KBM-7 (cell line): ENCODE measurements at regions of chr2 and their contacts with region 1.

Region 1: DNA sequence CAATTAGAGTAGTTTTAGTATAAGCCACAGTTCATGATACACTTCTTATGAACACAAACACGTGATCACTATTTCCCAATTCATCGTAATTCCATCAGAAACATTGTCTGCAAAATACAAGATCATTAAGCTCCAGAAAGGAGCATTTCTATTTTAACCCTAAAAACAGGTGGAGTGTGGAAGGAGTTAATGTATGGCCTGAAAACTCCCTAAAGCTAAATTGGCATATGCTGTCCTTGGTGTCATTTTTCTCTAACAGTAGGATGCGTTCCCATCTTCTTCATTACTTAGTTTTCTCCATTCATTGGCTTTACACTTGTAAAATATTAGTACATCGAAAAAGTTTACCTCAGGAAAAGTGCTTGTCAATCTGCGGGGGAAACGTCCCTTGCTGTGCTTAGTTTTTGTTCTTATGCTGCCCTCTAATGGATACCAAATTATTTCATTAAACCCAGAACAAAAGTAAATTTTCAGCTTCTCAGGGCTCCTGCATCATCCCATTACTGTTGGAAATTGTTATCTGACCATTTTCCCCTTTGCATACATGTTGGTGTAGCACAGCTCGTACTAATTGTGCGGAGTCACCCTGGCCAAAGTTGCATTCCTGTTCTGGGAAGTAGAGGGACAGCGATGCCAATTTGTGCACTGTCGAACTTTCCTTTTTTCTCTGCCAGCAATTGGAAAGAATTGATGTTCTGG is 153.4 kb downstream of the GPD2 start:
- DNase-seq: peak; percentile 61

Region 2: DNA sequence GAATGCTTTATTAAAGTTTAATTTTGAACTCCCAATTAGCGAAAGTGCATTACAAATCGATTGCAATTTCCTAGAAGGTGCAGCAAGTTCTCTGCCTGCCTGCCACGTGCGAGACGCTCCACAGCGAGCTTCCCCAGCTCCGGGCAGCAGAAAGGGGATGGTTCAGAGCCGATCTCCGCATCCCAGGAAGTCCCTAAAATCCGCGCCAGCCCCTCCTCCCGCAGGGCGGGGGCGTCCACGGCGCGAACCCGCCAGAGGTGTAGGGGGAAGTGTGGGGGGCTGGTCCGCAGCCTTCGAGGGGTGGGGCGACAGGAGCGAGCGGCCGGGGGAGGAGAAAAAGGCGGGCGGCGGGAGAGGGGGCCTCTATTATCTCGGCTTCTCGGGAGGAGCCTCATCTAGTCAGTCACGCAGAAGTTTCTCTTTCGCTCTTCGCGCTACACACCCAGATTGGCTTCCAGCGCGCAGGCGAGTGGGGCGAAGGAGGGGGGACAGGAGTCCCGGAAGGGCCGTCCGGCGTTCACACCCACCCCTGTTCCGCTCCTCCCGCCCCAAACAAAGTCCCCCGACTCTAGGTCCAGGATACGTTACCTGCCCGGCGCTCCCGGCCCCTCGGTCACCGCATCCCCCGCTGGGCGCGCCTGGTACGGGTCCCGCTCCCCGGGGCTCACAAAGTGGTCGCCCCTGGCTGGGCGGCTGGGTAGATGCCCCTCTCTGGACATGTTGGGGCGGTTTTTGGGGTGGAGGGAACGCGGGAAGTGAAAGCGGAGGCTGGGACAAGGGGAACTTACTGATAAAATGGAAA is 247.9 kb before region 1 on chr2:
- in situ Hi-C with region 1: loop called (anchors 25 kb)
- DNase-seq: peak; percentile 87

Region 3: GRCh38 chr2:156864325-156864724 is 274.8 kb after region 1 on chr2:
- in situ Hi-C with region 1: no loop called
- DNase-seq: no peak